ENCODE measurements at regions of chr7 and their contacts with region 1.

Region 1: DNA sequence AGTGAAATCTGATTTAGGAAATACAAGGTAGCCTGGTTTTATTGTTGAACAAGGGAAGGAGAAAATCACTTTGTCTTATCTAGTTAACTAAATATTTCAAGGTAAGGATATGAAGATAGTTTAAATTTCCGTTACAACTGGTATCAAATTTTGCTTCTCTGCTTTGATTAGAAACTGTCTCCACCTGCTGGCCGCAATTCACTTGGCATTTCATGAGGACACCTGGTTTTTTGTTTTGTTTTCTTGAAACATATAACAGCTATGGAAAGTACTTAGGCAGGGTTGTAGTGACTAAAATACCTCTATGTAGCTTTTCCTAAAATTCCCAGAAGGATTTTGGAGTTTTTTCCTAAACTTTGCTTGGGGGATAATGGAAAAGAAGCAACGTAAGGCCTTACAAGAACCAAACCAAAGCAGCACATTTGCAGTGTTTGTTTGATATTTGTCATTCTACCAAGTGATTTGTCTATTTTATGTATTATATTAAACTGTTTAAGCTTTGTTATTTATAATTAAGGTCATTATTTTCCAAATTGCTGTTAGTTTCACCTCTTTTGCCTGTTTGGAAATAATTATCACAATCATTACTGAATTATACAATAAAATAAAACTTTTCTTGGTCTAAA is 73.6 kb downstream of the AHCYL2 start:
- DNase-seq: peak; percentile 71
- ATAC-seq: no peak
- H3K4me3 Mint-ChIP-seq: no peak overlapping the region
- H3K27ac Mint-ChIP-seq: no peak overlapping the region
- H3K4me1 Mint-ChIP-seq: no peaks in the 10 kb centered on the region
- H3K27me3 Mint-ChIP-seq: no peaks in the 10 kb centered on the region

Region 2: DNA sequence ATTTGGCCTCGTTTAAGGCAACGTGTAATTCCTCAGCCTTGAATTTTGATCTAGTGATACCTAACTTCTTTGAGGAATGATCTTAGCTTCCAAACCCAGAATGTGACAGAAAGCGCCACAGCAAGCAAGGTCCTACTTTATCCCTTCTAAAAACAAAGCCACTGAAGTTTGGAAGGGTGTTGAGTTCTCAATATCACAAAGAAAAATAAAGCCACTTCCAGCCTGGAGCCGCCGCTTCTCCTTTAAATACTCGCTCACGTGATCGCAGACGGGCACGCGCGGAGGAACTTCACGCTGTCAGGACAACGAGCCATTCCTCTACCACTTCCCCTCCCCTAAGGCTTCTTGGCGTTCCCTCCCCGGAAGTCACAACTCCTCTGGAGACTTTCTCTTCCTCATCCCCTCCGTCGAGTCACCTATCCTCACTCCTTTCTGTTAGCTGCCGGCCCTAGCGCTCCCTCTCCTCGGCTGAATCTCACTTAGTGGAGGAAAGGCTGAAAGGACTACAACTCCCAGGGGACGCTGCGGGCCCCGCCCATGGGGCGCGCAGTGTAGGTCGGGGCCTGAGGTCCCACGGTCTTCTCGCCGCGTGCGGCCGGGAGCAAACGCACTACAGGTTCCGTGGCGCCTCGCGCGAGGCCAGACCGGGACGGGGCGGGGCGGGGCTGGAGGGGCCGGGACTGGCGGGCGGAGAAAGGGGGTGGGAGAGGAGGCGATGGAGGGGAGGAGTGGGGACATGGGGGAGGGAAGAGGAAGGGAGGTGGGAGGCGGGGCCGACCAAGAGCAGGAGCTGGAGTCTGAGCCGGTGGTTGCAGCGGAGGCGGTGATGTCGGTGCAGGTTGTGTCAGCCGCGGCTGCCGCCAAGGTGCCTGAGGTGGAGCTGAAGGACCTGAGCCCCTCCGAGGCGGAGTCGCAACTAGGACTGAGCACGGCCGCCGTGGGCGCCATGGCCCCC is 73.9 kb before region 1 on chr7 and contains the start of gene AHCYL2:
- CTCF ChIA-PET with region 1: interaction called, 76 read pairs
- POLR2A ChIA-PET with region 1: interaction called, 3 read pairs
- DNase-seq: peak; percentile 98
- ATAC-seq: peak; percentile 95
- H3K4me3 Mint-ChIP-seq: peak within 1 kb of the TSS; percentile 85
- H3K27ac Mint-ChIP-seq: peak within 1 kb of the TSS; percentile 95
- H3K4me1 Mint-ChIP-seq: peaks cover 32% of the 10 kb centered on the region
- H3K27me3 Mint-ChIP-seq: no peaks in the 10 kb centered on the region
- total RNA-seq, gene AHCYL2: 7.3 to 7.6 TPM

Region 3: DNA sequence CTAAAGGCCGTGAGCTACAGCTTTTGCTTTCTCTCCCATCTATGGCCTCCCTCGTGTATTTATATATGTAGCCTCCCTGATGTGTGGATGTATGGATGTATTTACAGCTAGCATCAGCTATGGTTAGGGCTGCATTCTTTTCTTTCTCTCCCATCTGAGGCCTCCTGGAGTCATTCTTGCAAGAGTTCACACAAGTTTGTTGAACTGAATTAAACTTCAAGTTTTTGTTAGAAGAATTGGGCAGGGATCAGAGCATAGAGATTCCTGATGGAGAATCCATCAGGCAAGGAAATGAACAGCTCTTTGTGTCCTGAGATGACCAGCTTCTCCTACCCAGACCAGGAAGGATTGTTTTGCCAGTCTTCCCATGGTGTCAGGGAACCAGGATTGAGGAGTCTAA is 13.3 kb before region 1 on chr7:
- CTCF ChIA-PET with region 1: interaction called, 20 read pairs
- POLR2A ChIA-PET with region 1: no interaction called
- DNase-seq: no peak
- ATAC-seq: no peak
- H3K4me3 Mint-ChIP-seq: no peak overlapping the region
- H3K27ac Mint-ChIP-seq: no peak overlapping the region
- H3K4me1 Mint-ChIP-seq: no peaks in the 10 kb centered on the region
- H3K27me3 Mint-ChIP-seq: no peaks in the 10 kb centered on the region

Region 4: GRCh38 chr7:129401967-129402860 is 103.8 kb after region 1 on chr7:
- CTCF ChIA-PET with region 1: no interaction called
- POLR2A ChIA-PET with region 1: no interaction called
- DNase-seq: peak; percentile 26
- ATAC-seq: peak; percentile 47
- H3K4me3 Mint-ChIP-seq: no peak overlapping the region
- H3K27ac Mint-ChIP-seq: no peak overlapping the region
- H3K4me1 Mint-ChIP-seq: no peaks in the 10 kb centered on the region
- H3K27me3 Mint-ChIP-seq: no peaks in the 10 kb centered on the region

Region 5: GRCh38 chr7:129574487-129574886 is 276.1 kb after region 1 on chr7:
- CTCF ChIA-PET with region 1: no interaction called
- POLR2A ChIA-PET with region 1: no interaction called
- DNase-seq: no peak
- ATAC-seq: no peak
- H3K4me3 Mint-ChIP-seq: no peak overlapping the region
- H3K27ac Mint-ChIP-seq: no peak overlapping the region
- H3K4me1 Mint-ChIP-seq: no peaks in the 10 kb centered on the region
- H3K27me3 Mint-ChIP-seq: peaks cover 10% of the 10 kb centered on the region